H1 (cell line): ENCODE measurements at regions of chr5 and their contacts with region 1.

Region 1: GRCh38 chr5:149799119-149799623 is 69.1 kb downstream of the PPARGC1B start:
- DNase-seq: no peak
- H3K4me3 ChIP-seq: no peak overlapping the region
- H3K27ac ChIP-seq: no peak overlapping the region
- H3K4me1 ChIP-seq: peaks cover 0 to 5% (median 0%) of the 10 kb centered on the region in 4 experiments; a peak in 1 of 7 replicates
- H3K27me3 ChIP-seq: no peaks in the 10 kb centered on the region
- CTCF ChIP-seq: no peak
- EP300 ChIP-seq: no peak
- POLR2A ChIP-seq: no peak
- RAD21 ChIP-seq: no peak

Region 2: GRCh38 chr5:149782018-149782894 is 16.9 kb before region 1 on chr5:
- CTCF ChIA-PET with region 1: interaction called, 43 read pairs
- POLR2A ChIA-PET with region 1: no interaction called
- DNase-seq: no peak
- H3K4me3 ChIP-seq: no peak overlapping the region
- H3K27ac ChIP-seq: no peak overlapping the region
- H3K4me1 ChIP-seq: peaks cover 3 to 11% (median 7%) of the 10 kb centered on the region in 4 experiments
- H3K27me3 ChIP-seq: no peaks in the 10 kb centered on the region
- CTCF ChIP-seq: no peak
- EP300 ChIP-seq: no peak
- POLR2A ChIP-seq: no peak
- RAD21 ChIP-seq: no peak